ENCODE measurements at regions of chr11 and their contacts with region 1.

Region 1: GRCh38 chr11:57530596-57531507 is at the start of gene TIMM10:
- DNase-seq: peak; percentile 97
- ATAC-seq: peak; percentile 94
- H3K4me3 ChIP-seq: peak within 1 kb of the TSS; percentile 70 to 94 (median 87)
- H3K4me3 Mint-ChIP-seq: peak within 1 kb of the TSS; percentile 94
- H3K27ac ChIP-seq: peak within 1 kb of the TSS; percentile 67 to 91
- H3K27ac Mint-ChIP-seq: peak within 1 kb of the TSS; percentile 95
- H3K4me1 ChIP-seq: peaks cover 13 to 17% of the 10 kb centered on the region in 2 donors
- H3K4me1 Mint-ChIP-seq: peaks cover 24% of the 10 kb centered on the region
- H3K27me3 ChIP-seq: no peaks in the 10 kb centered on the region
- H3K27me3 Mint-ChIP-seq: no peaks in the 10 kb centered on the region
- CTCF ChIP-seq: no peak
- total RNA-seq, gene TIMM10: 39.6 and 39.8 TPM in 2 replicates

Region 2: GRCh38 chr11:57335343-57336110 is 195.3 kb before region 1 on chr11 and contains the start of gene SSRP1:
- CTCF ChIA-PET with region 1: interaction called, 3 read pairs
- POLR2A ChIA-PET with region 1: interaction called, 3 read pairs
- intact Hi-C with region 1: loop called (anchors 1 kb)
- DNase-seq: peak; percentile 91
- ATAC-seq: peak; percentile 96
- H3K4me3 ChIP-seq: peak within 1 kb of the TSS; percentile 61 to 87 (median 83)
- H3K4me3 Mint-ChIP-seq: peak within 1 kb of the TSS; percentile 97
- H3K27ac ChIP-seq: peak within 1 kb of the TSS; percentile 74 to 87
- H3K27ac Mint-ChIP-seq: peak within 1 kb of the TSS; percentile 99
- H3K4me1 ChIP-seq: peaks cover 17 to 23% of the 10 kb centered on the region in 2 donors
- H3K4me1 Mint-ChIP-seq: peaks cover 27% of the 10 kb centered on the region
- H3K27me3 ChIP-seq: no peaks in the 10 kb centered on the region
- H3K27me3 Mint-ChIP-seq: peaks cover 5% of the 10 kb centered on the region
- CTCF ChIP-seq: no peak
- total RNA-seq, gene SSRP1: 63.8 and 66.6 TPM in 2 replicates

Region 3: GRCh38 chr11:57456960-57457642 is 73.8 kb before region 1 on chr11:
- CTCF ChIA-PET with region 1: interaction called, 348 read pairs
- POLR2A ChIA-PET with region 1: interaction called, 6 read pairs
- intact Hi-C with region 1: loop called (anchors 1 kb)
- DNase-seq: peak; percentile 86
- ATAC-seq: peak; percentile 70
- H3K4me3 ChIP-seq: no peak overlapping the region
- H3K4me3 Mint-ChIP-seq: peak overlapping the region; percentile 67
- H3K27ac ChIP-seq: no peak overlapping the region
- H3K27ac Mint-ChIP-seq: no peak overlapping the region
- H3K4me1 ChIP-seq: peaks cover 37 to 41% of the 10 kb centered on the region in 2 donors
- H3K4me1 Mint-ChIP-seq: peaks cover 26% of the 10 kb centered on the region
- H3K27me3 ChIP-seq: peaks cover 0 to 51% (median 28%) of the 10 kb centered on the region in 4 experiments
- H3K27me3 Mint-ChIP-seq: peaks cover 48% of the 10 kb centered on the region
- CTCF ChIP-seq: peak; percentile 97

Region 4: GRCh38 chr11:57499413-57499982 is 31.4 kb before region 1 on chr11:
- CTCF ChIA-PET with region 1: interaction called, 355 read pairs
- POLR2A ChIA-PET with region 1: no interaction called
- intact Hi-C with region 1: no loop called
- DNase-seq: peak; percentile 60
- ATAC-seq: peak; percentile 100
- H3K4me3 ChIP-seq: peak overlapping the region in 2 of 5 experiments; percentile 12 to 57
- H3K4me3 Mint-ChIP-seq: peak overlapping the region; percentile 38
- H3K27ac ChIP-seq: no peak overlapping the region
- H3K27ac Mint-ChIP-seq: no peak overlapping the region
- H3K4me1 ChIP-seq: peaks cover 0 to 6% of the 10 kb centered on the region in 2 donors
- H3K4me1 Mint-ChIP-seq: peaks cover 6% of the 10 kb centered on the region
- H3K27me3 ChIP-seq: no peaks in the 10 kb centered on the region
- H3K27me3 Mint-ChIP-seq: no peaks in the 10 kb centered on the region
- CTCF ChIP-seq: no peak

Region 5: DNA sequence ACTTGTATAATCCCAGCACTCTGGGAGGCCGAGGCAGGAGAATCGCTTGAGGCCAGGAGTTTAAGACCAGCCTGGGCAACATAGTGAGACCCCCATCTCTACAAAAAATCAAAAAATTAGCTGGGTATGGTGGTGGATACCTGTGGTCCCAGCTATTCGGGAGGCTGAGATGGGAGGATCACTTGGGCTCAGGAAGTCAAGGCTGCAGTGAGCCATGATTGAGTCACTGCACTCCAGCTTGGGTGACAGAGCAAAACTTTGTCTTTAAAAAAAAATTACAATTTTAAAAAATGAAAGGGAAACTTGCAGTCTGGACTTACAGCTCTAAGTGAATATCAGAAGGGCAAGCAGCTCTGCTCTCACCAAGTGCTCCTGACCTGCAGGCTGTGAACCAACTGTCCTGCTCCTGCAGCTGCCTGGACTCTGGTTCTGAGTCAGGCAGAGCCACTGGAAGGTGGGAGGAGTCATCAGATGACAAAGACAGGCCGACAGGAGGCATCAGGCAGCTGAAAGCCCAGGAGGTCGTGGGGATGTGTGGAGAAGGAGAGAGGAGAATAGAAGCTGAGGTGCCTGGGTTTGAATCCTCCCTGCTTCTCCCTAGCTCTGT is 16.1 kb after region 1 on chr11:
- CTCF ChIA-PET with region 1: interaction called, 16 read pairs
- POLR2A ChIA-PET with region 1: interaction called, 6 read pairs
- intact Hi-C with region 1: no loop called
- DNase-seq: no peak
- ATAC-seq: no peak
- H3K4me3 ChIP-seq: no peak overlapping the region
- H3K4me3 Mint-ChIP-seq: no peak overlapping the region
- H3K27ac ChIP-seq: peak overlapping the region; percentile 62 to 83
- H3K27ac Mint-ChIP-seq: peak overlapping the region; percentile 89
- H3K4me1 ChIP-seq: peaks cover 11 to 16% of the 10 kb centered on the region in 2 donors
- H3K4me1 Mint-ChIP-seq: peaks cover 15% of the 10 kb centered on the region
- H3K27me3 ChIP-seq: no peaks in the 10 kb centered on the region
- H3K27me3 Mint-ChIP-seq: no peaks in the 10 kb centered on the region
- CTCF ChIP-seq: no peak

Region 6: GRCh38 chr11:57604296-57605027 is 73.6 kb after region 1 on chr11:
- CTCF ChIA-PET with region 1: no interaction called
- POLR2A ChIA-PET with region 1: no interaction called
- intact Hi-C with region 1: no loop called
- DNase-seq: no peak
- ATAC-seq: no peak
- H3K4me3 ChIP-seq: no peak overlapping the region
- H3K4me3 Mint-ChIP-seq: no peak overlapping the region
- H3K27ac ChIP-seq: no peak overlapping the region
- H3K27ac Mint-ChIP-seq: no peak overlapping the region
- H3K4me1 ChIP-seq: no peaks in the 10 kb centered on the region
- H3K4me1 Mint-ChIP-seq: no peaks in the 10 kb centered on the region
- H3K27me3 ChIP-seq: peaks cover 0 to 2% (median 0%) of the 10 kb centered on the region in 4 experiments
- H3K27me3 Mint-ChIP-seq: peaks cover 23% of the 10 kb centered on the region
- CTCF ChIP-seq: no peak

Region 7: DNA sequence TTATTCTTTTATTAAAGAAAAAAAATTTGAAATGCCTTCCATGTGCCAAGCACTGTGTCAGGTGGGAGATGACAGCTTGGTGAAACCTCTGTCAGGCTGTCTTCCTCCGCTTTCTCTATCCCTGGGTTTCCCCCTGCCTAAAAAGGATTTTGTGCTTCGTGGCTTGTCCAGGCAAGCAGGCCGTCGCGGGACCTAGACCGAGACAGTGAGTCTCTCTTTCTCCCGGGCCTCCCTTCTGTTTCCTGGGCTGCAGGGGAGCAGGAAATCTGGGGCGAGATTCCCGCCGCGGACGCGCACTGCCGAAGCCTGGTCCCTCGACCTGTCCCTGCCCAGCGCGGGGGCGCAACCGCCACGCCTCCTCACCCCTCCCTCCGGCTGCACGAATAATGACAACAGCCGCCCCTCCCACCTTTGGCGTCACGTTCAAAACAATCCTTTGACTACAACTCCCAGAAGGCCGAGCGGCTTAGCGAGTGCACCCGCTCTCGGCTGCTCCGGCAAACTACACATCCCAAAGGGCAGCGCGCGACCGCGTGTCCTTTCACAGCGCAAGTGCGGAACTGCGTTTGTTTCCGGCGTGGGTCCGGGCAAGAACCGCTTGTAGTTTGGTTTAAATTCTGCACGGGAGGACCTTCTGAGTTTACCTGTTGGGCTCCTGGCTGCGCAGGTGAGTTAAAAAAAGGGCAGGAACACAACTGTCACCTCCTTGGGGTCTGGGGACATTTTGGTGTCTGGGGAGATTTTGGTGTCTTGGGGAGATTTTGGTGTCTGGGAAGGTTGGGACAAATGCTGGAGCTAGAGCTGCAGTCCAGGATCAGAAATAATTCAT is 126.6 kb after region 1 on chr11 and contains the start of gene CLP1:
- CTCF ChIA-PET with region 1: interaction called, 3 read pairs
- POLR2A ChIA-PET with region 1: no interaction called
- intact Hi-C with region 1: loop called (anchors 1 kb)
- DNase-seq: peak; percentile 98
- ATAC-seq: peak; percentile 97
- H3K4me3 ChIP-seq: peak within 1 kb of the TSS; percentile 68 to 95 (median 92)
- H3K4me3 Mint-ChIP-seq: peak within 1 kb of the TSS; percentile 94
- H3K27ac ChIP-seq: peak within 1 kb of the TSS; percentile 77 to 92
- H3K27ac Mint-ChIP-seq: peak within 1 kb of the TSS; percentile 94
- H3K4me1 ChIP-seq: peaks cover 8 to 14% of the 10 kb centered on the region in 2 donors
- H3K4me1 Mint-ChIP-seq: peaks cover 28% of the 10 kb centered on the region
- H3K27me3 ChIP-seq: no peaks in the 10 kb centered on the region
- H3K27me3 Mint-ChIP-seq: no peaks in the 10 kb centered on the region
- CTCF ChIP-seq: no peak
- total RNA-seq, gene CLP1: 15.5 and 15.8 TPM in 2 replicates

Region 8: GRCh38 chr11:57800444-57801182 is 269.8 kb after region 1 on chr11:
- CTCF ChIA-PET with region 1: interaction called, 3 read pairs
- POLR2A ChIA-PET with region 1: interaction called, 9 read pairs
- intact Hi-C with region 1: loop called (anchors 2 kb)
- DNase-seq: peak; percentile 81
- ATAC-seq: peak; percentile 90
- H3K4me3 ChIP-seq: no peak overlapping the region
- H3K4me3 Mint-ChIP-seq: peak overlapping the region; percentile 38
- H3K27ac ChIP-seq: peak overlapping the region; percentile 39 to 90
- H3K27ac Mint-ChIP-seq: peak overlapping the region; percentile 91
- H3K4me1 ChIP-seq: peaks cover 28 to 30% of the 10 kb centered on the region in 2 donors
- H3K4me1 Mint-ChIP-seq: peaks cover 36% of the 10 kb centered on the region
- H3K27me3 ChIP-seq: no peaks in the 10 kb centered on the region
- H3K27me3 Mint-ChIP-seq: no peaks in the 10 kb centered on the region
- CTCF ChIP-seq: peak; percentile 92